Heart left ventricle (tissue), 16 donors: ENCODE measurements at regions of chr6 and their contacts with region 1.

Region 1: GRCh38 chr6:167200806-167201205 is 43.0 kb upstream of the GPR31 start:
- DNase-seq: no peak
- ATAC-seq: no peak
- H3K4me3 ChIP-seq: no peak overlapping the region
- H3K27ac ChIP-seq: no peak overlapping the region
- H3K4me1 ChIP-seq: no peaks in the 10 kb centered on the region
- H3K27me3 ChIP-seq: peaks cover 0 to 43% (median 8%) of the 10 kb centered on the region in 9 donors
- CTCF ChIP-seq: no peak
- POLR2A ChIP-seq: no peak

Region 2: DNA sequence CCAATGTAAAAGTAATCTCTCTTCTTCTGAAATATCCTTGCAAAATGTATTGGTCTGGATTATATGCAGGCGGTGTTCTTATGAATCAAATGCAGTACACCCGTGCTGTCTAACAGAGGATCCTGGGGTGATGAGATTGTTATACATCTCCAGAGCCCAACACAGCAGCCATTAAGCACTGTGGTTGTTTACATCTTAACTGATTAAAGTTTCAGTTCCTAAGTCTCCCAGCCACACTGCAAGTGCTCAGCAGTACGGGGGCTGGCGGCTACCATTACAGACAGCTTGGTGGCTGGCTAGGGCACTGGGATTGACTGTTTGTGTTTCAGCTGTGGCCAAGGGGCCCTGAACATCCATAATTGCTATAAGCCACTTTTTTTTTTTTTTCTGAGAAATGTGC is 97.3 kb after region 1 on chr6:
- intact Hi-C with region 1: loop called in 1 of 10 experiments (anchors 10 kb)
- DNase-seq: no peak
- ATAC-seq: no peak
- H3K4me3 ChIP-seq: no peak overlapping the region
- H3K27ac ChIP-seq: no peak overlapping the region
- H3K4me1 ChIP-seq: no peaks in the 10 kb centered on the region
- H3K27me3 ChIP-seq: peaks cover 0 to 8% (median 0%) of the 10 kb centered on the region in 9 donors
- CTCF ChIP-seq: no peak
- POLR2A ChIP-seq: no peak

Region 3: DNA sequence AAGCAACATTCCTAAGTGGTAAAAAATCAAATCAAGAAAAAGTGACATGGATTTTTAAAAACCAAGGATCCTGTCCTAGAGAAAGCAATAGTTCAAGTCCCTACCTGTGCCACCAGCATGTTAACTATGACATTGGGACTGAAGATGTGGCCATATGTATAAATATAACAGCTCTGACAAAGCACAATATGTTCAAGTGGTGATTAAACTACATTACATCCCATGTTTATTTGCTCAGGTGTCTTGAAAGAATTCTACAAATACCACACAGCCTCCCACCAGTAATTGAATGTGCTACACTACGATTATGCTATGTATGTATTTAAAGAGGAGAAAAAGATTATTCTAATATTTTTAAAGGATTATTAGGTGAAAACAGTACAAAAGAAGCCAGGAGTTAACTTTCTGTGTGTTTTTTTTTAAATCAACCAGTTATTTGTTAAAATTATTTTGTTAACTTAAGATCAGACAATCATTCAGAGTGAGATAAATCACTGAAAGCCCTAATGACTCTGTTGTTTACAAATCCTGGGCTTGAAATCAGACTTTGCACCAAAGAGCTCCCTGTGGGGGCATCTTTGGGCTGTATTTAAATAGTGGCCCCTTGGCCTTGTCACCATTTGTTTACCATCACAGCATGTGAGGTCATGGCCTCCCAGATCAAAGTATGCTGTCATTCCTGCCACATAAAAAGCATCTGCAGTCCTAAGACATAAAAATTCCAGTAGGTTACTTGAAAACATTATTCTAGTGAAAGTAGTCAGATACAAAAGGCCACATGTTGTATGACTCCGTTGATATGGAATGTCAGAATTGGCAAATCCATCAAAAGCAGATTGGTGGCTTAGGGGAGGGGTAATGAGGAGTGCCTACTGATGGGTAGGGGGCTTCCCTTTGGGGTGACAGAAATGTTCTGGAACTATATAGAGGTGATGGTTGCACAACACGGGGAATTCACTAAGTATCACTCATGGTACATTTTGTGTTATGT is 141.2 kb after region 1 on chr6:
- intact Hi-C with region 1: no loop called
- DNase-seq: no peak
- ATAC-seq: no peak
- H3K4me3 ChIP-seq: no peak overlapping the region
- H3K27ac ChIP-seq: no peak overlapping the region
- H3K4me1 ChIP-seq: no peaks in the 10 kb centered on the region
- H3K27me3 ChIP-seq: peaks cover 0 to 7% (median 0%) of the 10 kb centered on the region in 9 donors
- CTCF ChIP-seq: no peak
- POLR2A ChIP-seq: no peak